PC-9 (cell line): ENCODE measurements at regions of chr6 and their contacts with region 1.

Region 1: DNA sequence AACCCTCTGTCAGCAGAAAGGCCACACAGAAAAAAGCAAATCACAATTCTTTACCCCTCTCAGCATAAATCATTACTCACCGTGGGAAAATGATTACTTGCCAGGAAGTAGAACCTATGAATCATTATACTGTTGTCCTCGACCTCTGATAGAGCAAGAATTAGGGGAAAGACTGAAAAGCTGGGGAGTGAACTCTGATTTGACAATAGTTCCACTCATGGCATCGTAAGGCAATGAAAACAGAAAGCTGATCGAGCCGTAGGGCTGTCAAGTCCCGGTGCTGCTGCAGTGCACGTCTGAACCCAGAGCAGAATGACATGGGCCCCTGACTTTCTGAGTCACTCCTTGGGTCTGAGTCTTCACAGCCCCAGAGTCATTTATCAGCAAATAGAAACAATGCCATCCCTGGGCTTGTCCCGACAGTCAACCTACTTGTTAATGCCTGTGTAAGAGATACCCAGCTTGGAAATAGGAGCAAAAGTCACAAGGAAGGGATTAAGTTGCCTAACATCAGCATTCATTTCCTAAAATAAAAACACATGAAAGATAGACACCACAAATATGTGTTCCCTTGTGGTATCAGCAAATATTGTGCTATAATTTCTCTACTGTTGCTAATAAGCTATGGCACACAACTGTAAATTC is 224.8 kb upstream of the MARCKS start:
- DNase-seq: peak; percentile 74 to 100
- H3K4me3 ChIP-seq: peak overlapping the region; percentile 27; the same call in 1 of the 2 replicates
- H3K27ac ChIP-seq: peak overlapping the region; percentile 99
- H3K4me1 ChIP-seq: peaks cover 68% of the 10 kb centered on the region
- H3K27me3 ChIP-seq: no peaks in the 10 kb centered on the region
- CTCF ChIP-seq: no peak

Region 2: GRCh38 chr6:113352029-113352801 is 280.1 kb before region 1 on chr6:
- CTCF ChIA-PET with region 1: no interaction called
- POLR2A ChIA-PET with region 1: no interaction called
- intact Hi-C with region 1: loop called (anchors 1 kb)
- DNase-seq: peak; percentile 77 to 100
- H3K4me3 ChIP-seq: peak overlapping the region; percentile 27
- H3K27ac ChIP-seq: peak overlapping the region; percentile 94
- H3K4me1 ChIP-seq: peaks cover 59% of the 10 kb centered on the region
- H3K27me3 ChIP-seq: no peaks in the 10 kb centered on the region
- CTCF ChIP-seq: no peak

Region 3: DNA sequence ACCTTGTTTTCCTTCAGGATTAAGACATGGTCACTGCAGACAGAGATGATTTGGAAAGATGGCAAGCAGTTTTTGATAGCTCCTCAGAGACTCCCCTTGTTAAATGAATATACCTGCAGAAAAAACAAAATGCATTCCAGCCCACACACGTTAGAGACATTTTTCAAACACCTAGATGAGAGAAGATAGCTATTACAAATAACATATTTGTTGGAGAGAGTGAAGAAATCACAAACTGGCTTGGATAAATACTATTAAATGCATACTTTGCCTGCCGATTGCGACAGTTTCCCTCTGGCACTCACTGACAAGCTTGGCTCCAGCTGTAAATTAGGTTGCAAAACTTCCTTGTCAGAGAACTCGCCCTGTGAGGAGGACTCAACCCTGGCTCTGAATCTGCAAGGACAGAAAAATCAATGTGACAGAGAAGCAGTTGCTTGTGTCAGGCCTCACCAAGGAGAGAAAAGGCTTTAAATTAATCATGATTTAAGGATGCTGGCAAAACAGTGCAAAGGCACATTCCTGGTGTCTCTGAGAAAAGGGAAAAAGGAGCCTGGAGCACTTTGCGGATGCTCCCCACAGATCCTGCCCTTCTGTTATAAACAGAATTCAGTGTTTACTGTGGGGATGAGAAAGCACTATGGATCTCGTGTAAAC is 198.9 kb before region 1 on chr6:
- CTCF ChIA-PET with region 1: no interaction called
- POLR2A ChIA-PET with region 1: no interaction called
- intact Hi-C with region 1: loop called (anchors 5 kb)
- DNase-seq: peak; percentile 61 to 99
- H3K4me3 ChIP-seq: peak overlapping the region; percentile 16; the same call in 1 of the 2 replicates
- H3K27ac ChIP-seq: peak overlapping the region; percentile 87
- H3K4me1 ChIP-seq: peaks cover 48% of the 10 kb centered on the region
- H3K27me3 ChIP-seq: no peaks in the 10 kb centered on the region
- CTCF ChIP-seq: no peak

Region 4: DNA sequence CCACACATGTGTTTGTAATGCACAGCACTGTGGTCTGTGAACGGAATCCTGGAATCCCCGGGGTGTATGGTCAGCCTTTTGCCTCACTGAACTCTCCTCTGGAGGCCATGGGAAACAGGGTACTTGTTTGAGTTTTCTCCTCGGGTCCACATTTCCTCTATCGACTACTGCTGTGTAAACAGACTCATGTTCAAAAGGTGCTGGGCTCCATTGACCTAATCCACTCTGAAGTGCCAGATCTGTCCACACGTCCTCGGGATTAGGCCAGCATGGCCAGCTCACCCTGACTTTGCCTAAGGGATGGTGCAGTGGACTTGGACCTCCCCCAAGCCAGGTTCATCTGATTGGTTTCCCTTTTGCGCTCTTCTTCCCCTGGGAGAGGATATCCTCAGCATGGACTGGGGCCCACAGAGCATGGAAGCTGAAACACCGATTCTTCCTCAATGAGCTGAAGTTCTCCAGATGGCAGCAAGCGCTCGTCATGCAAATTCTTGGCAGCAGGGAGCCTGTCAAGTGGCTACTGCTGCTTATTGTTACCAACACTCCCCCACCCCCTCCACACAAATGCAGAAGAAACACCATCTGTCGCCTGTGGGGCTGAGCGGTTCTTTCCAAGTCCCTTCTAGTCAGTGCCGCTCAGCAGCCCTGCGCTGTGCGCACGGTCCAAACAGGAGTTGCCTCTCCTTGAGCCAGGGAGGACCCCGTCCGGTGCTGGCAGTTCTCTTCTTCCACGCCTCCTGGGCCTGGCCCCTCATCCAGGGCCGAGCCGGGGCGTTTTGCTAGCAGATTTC is 67.8 kb before region 1 on chr6:
- CTCF ChIA-PET with region 1: no interaction called
- POLR2A ChIA-PET with region 1: no interaction called
- intact Hi-C with region 1: loop called (anchors 5 kb)
- DNase-seq: peak in 1 of 2 experiments; percentile 28
- H3K4me3 ChIP-seq: no peak overlapping the region
- H3K27ac ChIP-seq: no peak overlapping the region
- H3K4me1 ChIP-seq: peaks cover 21% of the 10 kb centered on the region
- H3K27me3 ChIP-seq: no peaks in the 10 kb centered on the region
- CTCF ChIP-seq: no peak

Region 5: DNA sequence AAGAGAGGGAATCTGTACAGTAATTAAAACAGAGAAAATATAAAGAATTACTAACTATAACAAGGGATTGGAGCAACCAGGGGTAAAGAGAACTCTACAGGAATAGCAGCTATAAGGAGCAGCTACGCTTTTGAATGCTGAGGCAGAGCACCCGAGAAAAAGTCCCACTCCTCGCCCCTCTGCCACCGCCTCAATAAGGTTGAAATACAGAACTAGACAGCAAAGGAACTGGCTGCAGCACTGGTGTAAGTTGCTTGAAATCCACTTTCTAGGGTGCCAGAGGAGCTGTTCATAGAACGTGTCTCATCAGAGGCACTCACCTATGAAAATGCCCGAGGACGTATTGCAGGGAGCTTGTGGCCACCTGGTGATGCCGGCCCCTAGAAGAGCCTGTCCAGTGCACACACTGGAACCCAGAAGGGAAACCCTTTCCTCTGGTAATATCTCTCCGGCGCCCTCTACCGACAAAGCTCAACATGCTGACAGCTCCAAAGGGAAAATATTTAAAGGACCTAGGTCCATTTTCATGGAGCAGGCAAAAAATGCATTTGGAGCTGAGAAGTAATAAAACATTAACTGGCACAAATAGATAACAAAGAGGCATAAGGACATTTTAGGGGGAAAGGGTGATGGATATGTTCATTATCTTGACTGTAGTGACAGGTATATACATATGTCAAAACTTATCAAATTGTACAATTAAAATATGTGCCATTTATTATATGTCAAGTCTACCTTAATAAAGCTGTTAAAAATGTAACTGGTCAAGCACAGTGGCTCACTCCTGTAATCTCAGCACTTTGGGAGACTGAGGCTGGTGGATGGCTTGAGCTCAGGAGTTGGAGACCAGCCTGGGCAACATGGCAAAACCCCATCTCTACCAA is 476.0 kb after region 1 on chr6:
- CTCF ChIA-PET with region 1: no interaction called
- POLR2A ChIA-PET with region 1: no interaction called
- intact Hi-C with region 1: no loop called
- DNase-seq: peak; percentile 60 to 66
- H3K4me3 ChIP-seq: no peak overlapping the region
- H3K27ac ChIP-seq: no peak overlapping the region
- H3K4me1 ChIP-seq: no peaks in the 10 kb centered on the region
- H3K27me3 ChIP-seq: no peaks in the 10 kb centered on the region
- CTCF ChIP-seq: peak; percentile 87